Endothelial cell of umbilical vein (primary cell): ENCODE measurements at regions of chr4 and their contacts with region 1.

Region 1: GRCh38 chr4:124322234-124323065 is 390.1 kb downstream of the ANKRD50 start:
- DNase-seq: peak; percentile 56
- H3K4me3 ChIP-seq: no peak overlapping the region
- H3K27ac ChIP-seq: no peak overlapping the region
- H3K4me1 ChIP-seq: no peaks in the 10 kb centered on the region
- H3K27me3 ChIP-seq: no peaks in the 10 kb centered on the region
- CTCF ChIP-seq: peak; percentile 14 to 25
- POLR2A ChIP-seq: no peak

Region 2: DNA sequence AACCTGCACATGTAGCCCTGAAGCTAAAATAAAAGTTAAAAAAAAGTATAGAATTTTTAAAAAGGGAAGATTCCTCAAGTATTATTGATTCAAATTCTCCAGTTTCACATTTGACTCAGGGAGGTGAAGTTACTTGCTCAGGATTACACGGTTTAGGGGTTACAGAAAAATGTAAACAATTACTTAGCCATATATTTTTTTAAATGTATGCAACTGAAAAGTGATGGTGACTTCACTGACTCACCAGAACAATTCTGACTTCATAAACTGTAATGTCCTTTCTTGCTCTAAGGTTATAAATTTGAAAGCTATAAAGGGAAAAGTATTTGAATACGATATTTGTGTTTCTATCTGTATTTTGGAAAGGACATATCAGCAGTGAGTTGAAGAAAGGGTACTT is 554.6 kb before region 1 on chr4:
- CTCF ChIA-PET with region 1: interaction called, 3 read pairs
- POLR2A ChIA-PET with region 1: no interaction called
- dilution Hi-C with region 1: no loop called
- intact Hi-C with region 1: loop called (anchors 5 kb)
- DNase-seq: no peak
- H3K4me3 ChIP-seq: no peak overlapping the region
- H3K27ac ChIP-seq: no peak overlapping the region
- H3K4me1 ChIP-seq: no peaks in the 10 kb centered on the region
- H3K27me3 ChIP-seq: no peaks in the 10 kb centered on the region
- CTCF ChIP-seq: no peak
- POLR2A ChIP-seq: no peak

Region 3: GRCh38 chr4:124306352-124306751 is 16.1 kb before region 1 on chr4:
- CTCF ChIA-PET with region 1: interaction called, 13 read pairs
- POLR2A ChIA-PET with region 1: no interaction called
- dilution Hi-C with region 1: no loop called
- intact Hi-C with region 1: no loop called
- DNase-seq: no peak
- H3K4me3 ChIP-seq: no peak overlapping the region
- H3K27ac ChIP-seq: no peak overlapping the region
- H3K4me1 ChIP-seq: no peaks in the 10 kb centered on the region
- H3K27me3 ChIP-seq: no peaks in the 10 kb centered on the region
- CTCF ChIP-seq: no peak
- POLR2A ChIP-seq: no peak

Region 4: GRCh38 chr4:124491361-124492145 is 169.1 kb after region 1 on chr4:
- CTCF ChIA-PET with region 1: no interaction called
- POLR2A ChIA-PET with region 1: no interaction called
- dilution Hi-C with region 1: no loop called
- intact Hi-C with region 1: no loop called
- DNase-seq: no peak
- H3K4me3 ChIP-seq: no peak overlapping the region
- H3K27ac ChIP-seq: no peak overlapping the region
- H3K4me1 ChIP-seq: no peaks in the 10 kb centered on the region
- H3K27me3 ChIP-seq: no peaks in the 10 kb centered on the region
- CTCF ChIP-seq: no peak
- POLR2A ChIP-seq: no peak

Region 5: GRCh38 chr4:125283707-125284279 is 961.3 kb after region 1 on chr4:
- CTCF ChIA-PET with region 1: interaction called, 20 read pairs
- POLR2A ChIA-PET with region 1: no interaction called
- dilution Hi-C with region 1: no loop called
- intact Hi-C with region 1: loop called (anchors 1 kb)
- DNase-seq: peak; percentile 54
- H3K4me3 ChIP-seq: no peak overlapping the region
- H3K27ac ChIP-seq: no peak overlapping the region
- H3K4me1 ChIP-seq: peaks cover 4% of the 10 kb centered on the region
- H3K27me3 ChIP-seq: no peaks in the 10 kb centered on the region
- CTCF ChIP-seq: peak; percentile 8 to 26
- POLR2A ChIP-seq: no peak